ENCODE measurements at regions of chr1 and their contacts with region 1.

Region 1: GRCh38 chr1:202716654-202717053 is 6.4 kb upstream of the SYT2 start:
- DNase-seq: no peak
- H3K4me3 ChIP-seq: no peak overlapping the region
- H3K27ac ChIP-seq: no peak overlapping the region
- H3K4me1 ChIP-seq: no peaks in the 10 kb centered on the region
- H3K27me3 ChIP-seq: no peaks in the 10 kb centered on the region
- CTCF ChIP-seq: no peak

Region 2: GRCh38 chr1:202184750-202185460 is 531.7 kb before region 1 on chr1:
- intact Hi-C with region 1: loop called (anchors 5 kb)
- DNase-seq: peak in 1 of 2 donors; percentile 91
- H3K4me3 ChIP-seq: no peak overlapping the region
- H3K27ac ChIP-seq: no peak overlapping the region
- H3K4me1 ChIP-seq: peaks cover 0 to 6% of the 10 kb centered on the region in 2 donors
- H3K27me3 ChIP-seq: no peaks in the 10 kb centered on the region
- CTCF ChIP-seq: peak; percentile 59 to 89 (median 88)

Region 3: GRCh38 chr1:202348509-202349205 is 368.0 kb before region 1 on chr1 and contains the start of gene PPP1R12B:
- intact Hi-C with region 1: loop called (anchors 1 kb)
- DNase-seq: peak; percentile 94 to 99
- H3K4me3 ChIP-seq: peak within 1 kb of the TSS; percentile 90 to 99
- H3K27ac ChIP-seq: peak within 1 kb of the TSS; percentile 82 to 87
- H3K4me1 ChIP-seq: peaks cover 0 to 4% of the 10 kb centered on the region in 2 donors
- H3K27me3 ChIP-seq: no peaks in the 10 kb centered on the region
- CTCF ChIP-seq: no peak
- total RNA-seq, gene PPP1R12B: 404 TPM

Region 4: DNA sequence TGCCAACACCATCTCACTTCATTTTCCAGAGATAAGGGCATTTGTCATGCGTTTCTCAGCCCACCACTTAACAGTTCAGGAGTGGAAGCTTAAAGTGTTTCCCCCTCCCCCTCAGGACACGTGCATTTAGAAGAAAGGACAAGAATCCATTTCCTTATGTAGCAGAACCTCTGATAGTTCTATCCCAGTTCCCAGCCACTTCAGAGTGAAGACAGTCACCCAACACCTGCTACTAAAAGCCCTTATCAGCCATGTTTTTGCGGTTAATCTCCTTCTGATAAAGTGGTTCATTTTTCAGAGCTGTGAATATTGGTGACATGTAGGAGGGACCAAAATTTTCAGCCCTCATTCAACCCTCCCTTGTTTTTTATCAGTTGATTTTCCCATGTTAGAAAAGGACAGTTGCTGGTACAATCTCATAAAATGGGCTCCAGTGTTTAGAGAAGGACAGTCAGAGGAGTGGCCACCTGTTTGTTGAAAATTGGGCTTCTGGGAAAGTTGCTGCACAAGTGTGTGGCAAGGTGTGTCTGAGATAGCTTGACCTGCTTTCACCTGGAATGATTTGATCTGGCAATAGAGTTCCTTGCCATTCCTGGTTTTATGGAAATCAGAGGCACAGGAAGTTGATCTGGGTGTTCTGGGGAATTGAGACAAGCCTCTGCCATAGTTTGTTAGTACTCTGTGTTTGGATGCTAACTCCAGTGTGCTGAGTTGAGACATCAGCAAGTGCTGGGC is 254.1 kb before region 1 on chr1:
- intact Hi-C with region 1: loop called (anchors 1 kb)
- DNase-seq: no peak
- H3K4me3 ChIP-seq: no peak overlapping the region
- H3K27ac ChIP-seq: no peak overlapping the region
- H3K4me1 ChIP-seq: peaks cover 0 to 8% of the 10 kb centered on the region in 2 donors
- H3K27me3 ChIP-seq: no peaks in the 10 kb centered on the region
- CTCF ChIP-seq: no peak

Region 5: GRCh38 chr1:202680586-202681352 is 35.9 kb before region 1 on chr1:
- intact Hi-C with region 1: no loop called
- DNase-seq: no peak
- H3K4me3 ChIP-seq: no peak overlapping the region
- H3K27ac ChIP-seq: no peak overlapping the region
- H3K4me1 ChIP-seq: no peaks in the 10 kb centered on the region
- H3K27me3 ChIP-seq: no peaks in the 10 kb centered on the region
- CTCF ChIP-seq: no peak

Region 6: DNA sequence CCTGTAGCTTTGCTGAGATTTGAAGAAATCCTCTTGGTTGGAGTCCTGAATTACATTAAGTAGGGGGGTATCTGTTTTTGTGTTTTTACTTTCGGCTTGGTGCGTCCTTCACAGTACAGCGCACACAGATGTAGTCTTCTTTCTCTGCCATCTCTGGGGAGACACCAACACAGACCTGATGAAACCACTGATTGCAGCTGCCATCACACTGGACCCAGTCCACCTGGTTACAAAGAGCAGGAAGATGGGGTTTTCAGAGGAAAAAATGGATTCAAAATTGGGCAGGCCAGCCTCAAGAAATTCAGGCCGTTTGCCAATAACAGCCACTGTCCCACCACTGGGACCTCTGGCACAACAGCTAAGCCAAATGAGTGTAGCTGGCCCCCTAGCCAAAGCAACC is 12.3 kb after region 1 on chr1:
- intact Hi-C with region 1: no loop called
- DNase-seq: no peak
- H3K4me3 ChIP-seq: no peak overlapping the region
- H3K27ac ChIP-seq: no peak overlapping the region
- H3K4me1 ChIP-seq: no peaks in the 10 kb centered on the region
- H3K27me3 ChIP-seq: no peaks in the 10 kb centered on the region
- CTCF ChIP-seq: no peak